ENCODE measurements at regions of chr3 and their contacts with region 1.

Region 1: GRCh38 chr3:16048435-16049318 is 125.8 kb upstream of the GALNT15 start:
- DNase-seq: peak in 1 of 4 donors; percentile 73
- ATAC-seq: peak; percentile 97
- H3K4me3 ChIP-seq: no peak overlapping the region
- H3K27ac ChIP-seq: no peak overlapping the region
- H3K4me1 ChIP-seq: peaks cover 0 to 20% of the 10 kb centered on the region in 2 donors
- H3K27me3 ChIP-seq: no peaks in the 10 kb centered on the region
- CTCF ChIP-seq: peak; percentile 73 to 78

Region 2: DNA sequence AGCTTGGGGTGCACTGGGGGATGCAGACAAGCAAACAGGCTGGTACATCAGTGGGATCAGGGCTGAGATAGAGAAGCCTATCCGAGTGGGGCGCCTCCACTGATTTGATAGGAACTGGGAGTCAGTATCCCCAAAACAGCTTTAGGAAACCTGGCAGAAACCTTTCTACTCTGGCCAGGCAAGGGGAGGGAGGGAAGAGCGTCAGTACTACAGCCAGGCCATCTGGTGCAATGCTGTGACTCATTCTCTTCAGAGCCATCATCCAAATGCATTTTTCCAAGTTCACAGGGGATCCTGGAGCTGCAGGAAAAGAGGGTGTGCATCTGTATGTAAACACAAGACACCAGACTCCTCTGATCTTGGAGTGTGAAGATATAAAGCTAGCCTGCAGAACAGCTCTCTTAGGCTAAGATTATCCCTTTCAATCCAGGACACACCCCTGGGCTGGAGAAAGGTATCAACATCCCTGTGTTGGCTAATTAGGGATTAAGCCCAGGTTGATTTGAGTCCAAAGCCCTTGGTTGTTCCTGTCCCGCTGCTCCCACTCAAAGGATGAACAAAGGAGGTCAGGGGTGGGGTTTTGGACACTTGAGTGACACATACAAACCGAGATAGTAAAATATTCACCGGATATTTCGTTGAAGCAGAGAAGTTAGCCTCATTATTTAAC is 135.1 kb after region 1 on chr3:
- intact Hi-C with region 1: loop called in 1 of 2 experiments (anchors 5 kb)
- DNase-seq: no peak
- ATAC-seq: peak; percentile 53
- H3K4me3 ChIP-seq: no peak overlapping the region
- H3K27ac ChIP-seq: no peak overlapping the region
- H3K4me1 ChIP-seq: peaks cover 0 to 15% of the 10 kb centered on the region in 2 donors
- H3K27me3 ChIP-seq: no peaks in the 10 kb centered on the region
- CTCF ChIP-seq: no peak

Measured in left lung (tissue), 14 donors.